ENCODE measurements at regions of chr22 and their contacts with region 1.

Region 1: GRCh38 chr22:44080936-44081861 is 57.1 kb downstream of the PARVB start:
- DNase-seq: peak; percentile 63
- H3K4me3 ChIP-seq: no peak overlapping the region
- CTCF ChIP-seq: peak; percentile 96

Region 2: GRCh38 chr22:43993027-43993760 is 88.0 kb before region 1 on chr22:
- in situ Hi-C with region 1: loop called (anchors 5 kb)
- DNase-seq: peak; percentile 38
- H3K4me3 ChIP-seq: no peak overlapping the region
- CTCF ChIP-seq: peak; percentile 96

Region 3: GRCh38 chr22:44012162-44012561 is 69.0 kb before region 1 on chr22:
- in situ Hi-C with region 1: no loop called
- DNase-seq: no peak
- H3K4me3 ChIP-seq: no peak overlapping the region
- CTCF ChIP-seq: no peak

Region 4: GRCh38 chr22:44172370-44173108 is 91.3 kb after region 1 on chr22:
- in situ Hi-C with region 1: no loop called
- DNase-seq: no peak
- H3K4me3 ChIP-seq: no peak overlapping the region
- CTCF ChIP-seq: no peak

Region 5: DNA sequence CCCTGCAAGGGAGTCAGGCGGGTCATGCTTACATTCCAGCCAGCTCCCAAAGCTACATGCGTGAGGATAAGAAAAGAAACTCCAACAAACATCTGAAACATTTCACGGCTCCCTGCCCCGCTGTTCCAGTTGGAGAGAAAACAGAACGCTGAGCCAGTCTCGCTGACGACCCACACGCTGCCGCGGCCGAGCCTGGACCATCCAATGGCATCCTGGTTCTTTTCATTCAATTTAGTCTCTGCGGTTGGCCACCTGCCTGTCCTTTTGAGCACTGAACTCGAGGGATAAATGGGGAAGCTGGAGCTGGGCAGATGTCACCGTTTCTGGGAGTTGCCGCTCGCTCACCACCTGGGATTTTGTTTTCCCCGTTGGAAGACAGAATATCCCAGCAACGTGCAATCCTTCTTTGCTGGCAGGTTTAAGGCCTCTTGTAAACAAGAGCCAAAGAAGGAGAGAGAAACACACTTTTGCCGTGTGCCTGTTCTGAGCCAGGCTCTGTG is 276.8 kb after region 1 on chr22:
- in situ Hi-C with region 1: loop called (anchors 5 kb)
- DNase-seq: peak; percentile 32
- H3K4me3 ChIP-seq: no peak overlapping the region
- CTCF ChIP-seq: no peak

Region 6: DNA sequence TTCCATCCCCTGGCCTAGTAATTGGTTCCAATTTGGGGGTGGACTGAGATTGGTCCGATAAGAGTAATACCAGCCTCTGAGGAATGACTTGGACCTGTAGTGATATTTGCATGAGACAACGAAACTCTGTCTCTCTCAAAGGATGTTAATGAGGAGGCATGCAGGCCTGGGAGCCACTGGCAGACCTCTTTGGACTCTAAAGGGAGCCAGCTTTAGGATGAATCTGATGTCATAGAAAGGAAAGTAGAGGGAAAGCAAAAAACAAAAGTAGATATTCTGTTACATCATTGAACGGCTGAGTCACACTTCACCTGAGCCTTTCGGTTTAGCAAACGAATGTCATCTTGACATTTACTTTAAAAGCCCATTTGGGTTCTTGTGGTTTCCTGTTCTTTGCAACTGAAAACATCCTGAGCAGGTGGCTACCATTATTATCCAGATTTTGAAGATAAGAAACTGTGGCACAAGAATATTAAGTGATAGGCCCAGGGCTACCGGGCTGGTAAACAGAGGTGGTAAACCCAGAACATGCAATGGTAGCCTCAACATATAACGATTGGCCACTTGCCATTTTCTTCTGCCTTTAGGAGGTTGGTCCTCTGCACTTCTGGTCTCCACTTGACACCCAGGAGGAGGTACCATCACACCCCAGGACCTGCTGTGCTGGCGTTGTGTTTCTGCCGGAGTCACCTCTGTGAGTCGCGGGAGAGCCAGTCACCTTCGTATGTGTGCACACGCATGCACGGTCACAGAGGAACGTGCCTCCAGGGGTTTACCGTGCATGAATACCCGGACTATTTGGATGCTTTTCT is 374.2 kb after region 1 on chr22:
- in situ Hi-C with region 1: loop called (anchors 10 kb)
- DNase-seq: no peak
- H3K4me3 ChIP-seq: no peak overlapping the region
- CTCF ChIP-seq: no peak

Region 7: DNA sequence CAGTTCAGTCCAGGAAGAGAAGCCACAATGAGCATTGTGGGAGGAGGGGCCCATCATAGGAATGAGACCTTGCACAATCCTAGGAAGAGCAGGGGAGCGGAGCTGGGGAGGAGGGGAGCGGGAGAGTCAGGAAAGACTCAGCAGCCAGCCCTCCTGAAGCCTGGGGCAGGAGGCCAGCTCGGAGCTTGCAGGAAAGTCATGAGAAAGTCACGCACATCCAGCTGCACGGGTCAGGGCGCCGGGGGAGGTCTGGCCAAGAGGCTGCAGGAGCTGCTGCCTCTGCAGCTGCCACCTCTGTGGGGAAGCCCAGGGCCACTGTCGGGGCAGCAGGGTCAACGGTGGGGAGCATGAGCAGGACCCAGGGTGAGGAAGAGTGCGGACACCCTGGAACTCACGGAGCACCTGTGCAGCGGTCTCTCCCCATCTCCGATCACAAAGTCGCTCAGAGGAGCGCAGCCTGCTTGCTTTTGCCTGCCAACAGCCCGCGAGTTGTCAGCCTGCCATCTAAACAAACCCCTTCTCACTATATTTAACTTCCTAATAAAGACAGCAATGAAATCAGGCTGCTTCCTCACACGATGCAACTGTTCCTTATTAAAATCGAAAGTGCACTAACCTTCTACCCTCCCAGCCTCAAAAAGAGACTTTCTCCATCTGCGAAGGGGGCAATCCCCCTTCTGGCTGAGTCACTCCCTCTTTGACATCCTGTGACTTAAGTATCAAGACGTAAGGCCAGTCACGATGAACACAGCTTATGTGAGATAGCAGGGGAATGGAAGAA is 469.7 kb after region 1 on chr22:
- in situ Hi-C with region 1: loop called (anchors 5 kb)
- DNase-seq: peak; percentile 51
- H3K4me3 ChIP-seq: peak overlapping the region; percentile 9
- CTCF ChIP-seq: no peak

Measured in astrocyte of the cerebellum (primary cell).